IMR-90 (cell line): ENCODE measurements at regions of chr2 and their contacts with region 1.

Region 1: GRCh38 chr2:19408592-19408991 is 50.2 kb upstream of the OSR1 start:
- DNase-seq: peak; percentile 1
- ATAC-seq: peak; percentile 24; the same call in 1 of the 2 replicates
- H3K4me3 ChIP-seq: no peak overlapping the region
- H3K27ac ChIP-seq: no peak overlapping the region
- H3K4me1 ChIP-seq: no peaks in the 10 kb centered on the region
- H3K27me3 ChIP-seq: peaks cover 4% of the 10 kb centered on the region; the same call in 1 of the 2 replicates
- CTCF ChIP-seq: no peak
- POLR2A ChIP-seq: no peak
- RAD21 ChIP-seq: no peak

Region 2: DNA sequence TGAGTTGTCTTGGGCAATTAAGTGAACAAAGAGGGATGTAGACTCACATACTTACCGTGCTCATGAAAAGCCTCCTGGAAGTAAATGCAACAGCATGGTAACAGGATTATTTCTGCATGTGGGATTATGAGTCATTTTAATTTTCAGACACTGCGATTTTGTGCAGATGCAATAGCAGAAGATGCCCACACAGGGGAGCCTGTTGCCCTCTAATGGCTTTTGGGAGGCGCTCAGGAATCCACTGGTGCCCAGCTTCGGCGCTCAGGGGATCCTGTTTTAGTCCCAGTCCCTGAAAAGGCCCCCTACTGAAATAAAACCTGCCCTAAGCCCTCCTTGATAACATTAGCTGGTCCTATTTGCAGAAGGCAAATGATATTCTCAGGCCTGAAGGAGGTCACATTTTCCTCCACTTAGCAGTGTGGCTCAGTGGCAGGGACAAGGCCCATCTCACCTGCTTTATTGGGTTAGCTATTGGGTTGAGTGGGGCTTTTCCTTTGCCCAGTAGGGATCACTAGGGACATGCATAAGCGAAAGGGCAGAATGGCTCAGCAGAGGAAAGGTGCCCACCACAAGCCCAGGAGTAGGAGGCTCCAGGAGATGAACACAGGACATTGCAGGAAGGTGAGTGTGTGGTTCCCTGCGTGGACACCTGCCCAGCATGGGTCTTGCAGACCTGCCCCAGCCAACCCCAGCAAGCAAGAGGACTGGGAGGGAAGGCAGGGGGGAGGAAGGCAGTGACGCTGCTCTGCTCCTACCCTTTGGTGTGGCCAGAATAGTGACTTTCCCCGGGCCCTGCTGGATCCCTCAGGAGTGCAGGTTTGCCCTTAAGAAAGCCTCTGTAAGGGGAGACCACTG is 1556.6 kb before region 1 on chr2:
- CTCF ChIA-PET with region 1: no interaction called
- POLR2A ChIA-PET with region 1: no interaction called
- dilution Hi-C with region 1: no loop called
- in situ Hi-C with region 1: no loop called
- intact Hi-C with region 1: no loop called
- DNase-seq: peak; percentile 69
- ATAC-seq: peak; percentile 98
- H3K4me3 ChIP-seq: no peak overlapping the region
- H3K27ac ChIP-seq: no peak overlapping the region
- H3K4me1 ChIP-seq: no peaks in the 10 kb centered on the region
- H3K27me3 ChIP-seq: peaks cover 5% of the 10 kb centered on the region
- CTCF ChIP-seq: peak; percentile 98
- POLR2A ChIP-seq: peak; percentile 71
- RAD21 ChIP-seq: peak; percentile 98

Region 3: GRCh38 chr2:19484736-19485135 is 76.1 kb after region 1 on chr2:
- CTCF ChIA-PET with region 1: no interaction called
- POLR2A ChIA-PET with region 1: no interaction called
- dilution Hi-C with region 1: no loop called
- in situ Hi-C with region 1: no loop called
- intact Hi-C with region 1: loop called (anchors 5 kb)
- DNase-seq: no peak
- ATAC-seq: no peak
- H3K4me3 ChIP-seq: no peak overlapping the region
- H3K27ac ChIP-seq: no peak overlapping the region
- H3K4me1 ChIP-seq: no peaks in the 10 kb centered on the region
- H3K27me3 ChIP-seq: no peaks in the 10 kb centered on the region
- CTCF ChIP-seq: no peak
- POLR2A ChIP-seq: no peak
- RAD21 ChIP-seq: no peak

Region 4: GRCh38 chr2:19504400-19505198 is 96.0 kb after region 1 on chr2:
- CTCF ChIA-PET with region 1: no interaction called
- POLR2A ChIA-PET with region 1: no interaction called
- dilution Hi-C with region 1: no loop called
- in situ Hi-C with region 1: no loop called
- intact Hi-C with region 1: loop called (anchors 5 kb)
- DNase-seq: no peak
- ATAC-seq: peak; percentile 40; the same call in 1 of the 2 replicates
- H3K4me3 ChIP-seq: no peak overlapping the region
- H3K27ac ChIP-seq: no peak overlapping the region
- H3K4me1 ChIP-seq: no peaks in the 10 kb centered on the region; the same call in 1 of the 2 replicates
- H3K27me3 ChIP-seq: peaks cover 23% of the 10 kb centered on the region
- CTCF ChIP-seq: no peak
- POLR2A ChIP-seq: no peak
- RAD21 ChIP-seq: no peak